Aorta (tissue), 5 donors: ENCODE measurements at regions of chr3 and their contacts with region 1.

Region 1: DNA sequence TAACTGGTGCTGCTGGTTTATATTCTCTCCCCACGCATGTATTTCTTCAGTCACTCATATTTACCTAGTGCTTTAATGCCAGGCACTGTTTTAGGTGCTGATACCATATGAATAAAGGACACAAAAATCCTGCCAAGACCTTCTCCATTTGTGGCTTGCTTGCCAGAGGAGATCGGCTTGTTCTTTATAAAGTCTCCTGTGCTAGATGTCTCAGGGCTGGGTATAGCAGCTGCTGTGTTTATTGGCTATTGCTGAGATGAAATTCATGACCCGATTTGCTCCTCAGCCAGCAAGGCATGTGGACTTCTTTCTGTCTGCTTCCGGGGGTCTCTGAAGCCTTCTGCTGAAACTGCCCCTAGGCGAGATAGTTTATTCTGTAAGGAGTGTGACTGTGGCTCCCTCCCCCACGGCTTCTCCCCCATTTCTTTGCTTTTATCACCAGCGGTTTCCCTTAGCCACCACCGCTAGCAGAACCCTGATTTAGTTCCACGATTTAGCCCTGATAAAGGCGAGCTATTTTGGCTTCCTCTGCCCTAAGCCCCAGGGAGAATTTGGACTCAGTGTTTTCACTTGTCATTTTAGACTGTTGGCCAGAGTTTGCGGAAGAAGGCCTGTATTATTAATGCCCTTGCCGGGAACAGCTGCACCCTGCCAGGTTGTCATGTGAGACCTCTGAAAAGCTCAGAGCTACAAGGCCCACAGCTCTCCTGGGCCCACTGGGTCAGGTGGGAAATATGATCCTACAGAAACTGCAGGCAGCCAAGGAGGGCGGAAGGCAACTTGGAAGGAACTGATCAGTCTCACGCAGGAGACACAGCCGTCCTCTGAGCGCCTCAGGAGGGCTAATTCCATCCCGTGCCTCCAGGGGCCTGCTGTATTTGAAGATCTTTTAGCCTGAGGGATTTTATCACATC is 46.8 kb downstream of the ST6GAL1 start:
- DNase-seq: peak; percentile 87 to 91
- ATAC-seq: peak; percentile 91
- H3K4me3 ChIP-seq: no peak overlapping the region
- H3K27ac ChIP-seq: peak overlapping the region; percentile 52 to 98
- H3K4me1 ChIP-seq: peaks cover 4 to 7% of the 10 kb centered on the region in 2 donors
- H3K27me3 ChIP-seq: no peaks in the 10 kb centered on the region

Region 2: GRCh38 chr3:186854954-186855353 is 122.1 kb before region 1 on chr3:
- intact Hi-C with region 1: no loop called
- DNase-seq: no peak
- ATAC-seq: no peak
- H3K4me3 ChIP-seq: no peak overlapping the region
- H3K27ac ChIP-seq: no peak overlapping the region
- H3K4me1 ChIP-seq: no peaks in the 10 kb centered on the region
- H3K27me3 ChIP-seq: no peaks in the 10 kb centered on the region

Region 3: GRCh38 chr3:187066228-187066995 is 89.3 kb after region 1 on chr3:
- intact Hi-C with region 1: no loop called
- DNase-seq: no peak
- ATAC-seq: no peak
- H3K4me3 ChIP-seq: no peak overlapping the region
- H3K27ac ChIP-seq: peak overlapping the region in 1 of 2 donors; percentile 60
- H3K4me1 ChIP-seq: no peaks in the 10 kb centered on the region
- H3K27me3 ChIP-seq: no peaks in the 10 kb centered on the region

Region 4: GRCh38 chr3:187101184-187102072 is 124.3 kb after region 1 on chr3:
- intact Hi-C with region 1: loop called (anchors 5 to 10 kb)
- DNase-seq: peak; percentile 92
- ATAC-seq: peak; percentile 82
- H3K4me3 ChIP-seq: peak overlapping the region in 1 of 2 donors; percentile 32
- H3K27ac ChIP-seq: peak overlapping the region; percentile 73 to 91
- H3K4me1 ChIP-seq: peaks cover 10 to 12% of the 10 kb centered on the region in 2 donors
- H3K27me3 ChIP-seq: no peaks in the 10 kb centered on the region

Region 5: GRCh38 chr3:187186801-187187421 is 209.8 kb after region 1 on chr3:
- intact Hi-C with region 1: loop called in 1 of 2 experiments (anchors 5 kb)
- DNase-seq: peak; percentile 77 to 85
- ATAC-seq: peak; percentile 93
- H3K4me3 ChIP-seq: no peak overlapping the region
- H3K27ac ChIP-seq: peak overlapping the region; percentile 78 to 99
- H3K4me1 ChIP-seq: peaks cover 4 to 8% of the 10 kb centered on the region in 2 donors
- H3K27me3 ChIP-seq: no peaks in the 10 kb centered on the region